CD8-positive, alpha-beta T cell (primary cell): ENCODE measurements at regions of chr15 and their contacts with region 1.

Region 1: GRCh38 chr15:88638626-88639372 is at the start of gene ISG20:
- DNase-seq: peak; percentile 88 to 100 (median 96)
- ATAC-seq: peak; percentile 80
- H3K4me3 ChIP-seq: peak within 1 kb of the TSS; percentile 67 to 76
- H3K4me3 Mint-ChIP-seq: peak within 1 kb of the TSS; percentile 88
- H3K27ac ChIP-seq: peak within 1 kb of the TSS; percentile 97
- H3K27ac Mint-ChIP-seq: peak within 1 kb of the TSS; percentile 97
- H3K4me1 ChIP-seq: peaks cover 88% of the 10 kb centered on the region
- H3K4me1 Mint-ChIP-seq: peaks cover 77% of the 10 kb centered on the region
- H3K27me3 ChIP-seq: no peaks in the 10 kb centered on the region
- H3K27me3 Mint-ChIP-seq: no peaks in the 10 kb centered on the region
- CTCF ChIP-seq: peak; percentile 63
- total RNA-seq, gene ISG20: 89.2 to 93.4 TPM

Region 2: GRCh38 chr15:88546248-88547129 is 92.3 kb before region 1 on chr15 and contains the start of gene DET1:
- CTCF ChIA-PET with region 1: no interaction called
- POLR2A ChIA-PET with region 1: no interaction called
- intact Hi-C with region 1: loop called in 1 of 2 experiments (anchors 1 kb)
- DNase-seq: peak; percentile 87 to 98 (median 94)
- ATAC-seq: peak; percentile 91
- H3K4me3 ChIP-seq: peak within 1 kb of the TSS; percentile 60 to 62
- H3K4me3 Mint-ChIP-seq: peak within 1 kb of the TSS; percentile 91
- H3K27ac ChIP-seq: peak within 1 kb of the TSS; percentile 72 to 80
- H3K27ac Mint-ChIP-seq: peak within 1 kb of the TSS; percentile 96
- H3K4me1 ChIP-seq: peaks cover 6% of the 10 kb centered on the region
- H3K4me1 Mint-ChIP-seq: peaks cover 18% of the 10 kb centered on the region
- H3K27me3 ChIP-seq: no peaks in the 10 kb centered on the region
- H3K27me3 Mint-ChIP-seq: no peaks in the 10 kb centered on the region
- CTCF ChIP-seq: peak; percentile 70
- total RNA-seq, gene DET1: 1.4 to 2.0 TPM

Region 3: GRCh38 chr15:88649286-88649733 is 10.5 kb after region 1 on chr15:
- CTCF ChIA-PET with region 1: interaction called, 3 read pairs
- POLR2A ChIA-PET with region 1: interaction called, 11 read pairs
- intact Hi-C with region 1: no loop called
- DNase-seq: peak; percentile 33 to 85 (median 71)
- ATAC-seq: peak; percentile 86
- H3K4me3 ChIP-seq: peak overlapping the region in 1 of 2 experiments; percentile 10
- H3K4me3 Mint-ChIP-seq: peak overlapping the region; percentile 77
- H3K27ac ChIP-seq: peak overlapping the region; percentile 48 to 83
- H3K27ac Mint-ChIP-seq: peak overlapping the region; percentile 99
- H3K4me1 ChIP-seq: peaks cover 91% of the 10 kb centered on the region
- H3K4me1 Mint-ChIP-seq: peaks cover 90% of the 10 kb centered on the region
- H3K27me3 ChIP-seq: no peaks in the 10 kb centered on the region
- H3K27me3 Mint-ChIP-seq: no peaks in the 10 kb centered on the region
- CTCF ChIP-seq: no peak

Region 4: DNA sequence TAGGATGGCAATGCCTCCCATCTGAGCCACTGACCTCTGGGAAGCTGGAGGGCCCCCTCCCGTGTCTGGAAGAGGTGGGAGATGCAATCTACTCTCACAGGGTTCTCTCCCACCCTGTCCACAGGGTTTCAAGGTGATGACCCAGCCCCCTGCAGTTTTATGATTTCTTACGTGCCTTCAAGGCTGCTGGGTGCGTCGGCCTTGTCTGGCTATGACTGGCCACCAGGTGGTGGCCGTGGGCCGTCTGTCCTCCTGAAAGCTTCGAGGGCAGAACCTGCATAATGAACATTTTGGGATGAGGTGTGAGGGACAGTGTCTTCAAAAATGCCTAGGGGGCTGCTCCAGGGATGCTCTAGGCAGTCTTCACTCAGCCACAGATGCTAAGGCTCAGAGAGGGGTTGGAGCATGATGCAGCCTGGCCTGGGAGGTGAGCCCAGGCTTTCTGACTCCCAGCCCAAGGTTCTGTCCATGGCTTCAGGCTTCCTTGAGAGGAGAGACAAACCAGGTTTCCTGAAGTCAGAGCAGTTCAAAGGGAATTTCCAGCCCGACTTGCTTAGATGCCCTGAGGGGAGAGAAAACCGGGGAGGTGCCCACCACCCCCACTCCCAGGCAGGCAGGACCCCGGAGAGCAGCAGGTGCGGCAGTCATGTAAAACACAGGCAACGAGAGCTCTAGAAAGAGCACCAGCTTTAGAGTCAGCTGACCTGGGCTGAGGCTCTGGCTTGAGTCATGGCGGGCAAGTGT is 18.7 kb after region 1 on chr15:
- CTCF ChIA-PET with region 1: interaction called, 4 read pairs
- POLR2A ChIA-PET with region 1: interaction called, 12 read pairs
- intact Hi-C with region 1: no loop called
- DNase-seq: peak in 3 of 9 experiments; percentile 31 to 47 (median 44)
- ATAC-seq: no peak
- H3K4me3 ChIP-seq: no peak overlapping the region
- H3K4me3 Mint-ChIP-seq: peak overlapping the region; percentile 22
- H3K27ac ChIP-seq: peak overlapping the region in 1 of 2 experiments; percentile 44
- H3K27ac Mint-ChIP-seq: peak overlapping the region; percentile 88
- H3K4me1 ChIP-seq: peaks cover 86% of the 10 kb centered on the region
- H3K4me1 Mint-ChIP-seq: peaks cover 82% of the 10 kb centered on the region
- H3K27me3 ChIP-seq: no peaks in the 10 kb centered on the region
- H3K27me3 Mint-ChIP-seq: no peaks in the 10 kb centered on the region
- CTCF ChIP-seq: no peak

Region 5: GRCh38 chr15:88664151-88664778 is 25.5 kb after region 1 on chr15:
- CTCF ChIA-PET with region 1: interaction called, 46 read pairs
- POLR2A ChIA-PET with region 1: interaction called, 14 read pairs
- intact Hi-C with region 1: loop called in 1 of 2 experiments (anchors 1 kb)
- DNase-seq: peak in 7 of 9 experiments; percentile 29 to 80 (median 66)
- ATAC-seq: peak; percentile 91
- H3K4me3 ChIP-seq: no peak overlapping the region
- H3K4me3 Mint-ChIP-seq: no peak overlapping the region
- H3K27ac ChIP-seq: no peak overlapping the region
- H3K27ac Mint-ChIP-seq: peak overlapping the region; percentile 15
- H3K4me1 ChIP-seq: peaks cover 35% of the 10 kb centered on the region
- H3K4me1 Mint-ChIP-seq: peaks cover 32% of the 10 kb centered on the region
- H3K27me3 ChIP-seq: no peaks in the 10 kb centered on the region
- H3K27me3 Mint-ChIP-seq: peaks cover 6% of the 10 kb centered on the region
- CTCF ChIP-seq: peak; percentile 63